ENCODE measurements at regions of chr1 and their contacts with region 1.

Region 1: DNA sequence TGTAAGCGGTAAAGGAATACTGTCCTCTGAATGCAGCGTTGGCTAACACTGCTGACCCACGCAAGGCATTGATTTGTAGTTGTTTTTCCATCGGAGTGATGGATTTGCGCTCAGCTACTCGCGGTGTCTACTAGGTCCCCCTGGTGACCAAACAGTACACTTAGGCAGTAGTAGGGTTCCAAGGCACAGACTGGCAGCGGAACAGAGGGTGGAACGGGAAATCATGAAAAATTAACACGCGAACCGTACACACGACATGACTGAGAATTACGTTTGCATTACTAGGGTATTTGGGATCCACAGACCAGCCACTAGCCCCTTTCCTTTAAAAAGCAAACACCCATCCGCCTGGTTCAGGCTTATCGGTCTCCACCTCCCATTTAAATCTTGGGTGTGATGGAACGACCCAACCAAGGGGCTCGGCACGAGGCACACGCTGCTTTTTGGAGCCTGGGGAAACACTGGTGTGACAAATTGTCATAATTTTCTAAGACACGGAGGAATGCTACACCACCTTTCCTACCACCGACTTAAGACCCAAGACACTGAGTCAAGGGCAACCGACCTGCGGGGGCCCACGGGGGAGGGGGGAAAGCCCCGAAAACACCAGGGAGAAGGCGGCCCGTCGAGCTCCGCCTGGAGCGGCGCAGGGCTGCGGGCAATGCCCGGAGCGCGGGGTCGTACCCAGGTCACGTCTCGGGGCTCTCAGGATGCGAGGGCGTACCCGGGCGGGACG is 699 bp downstream of the DIPK1A start:
- DNase-seq: peak; percentile 40 to 90 (median 62)
- ATAC-seq: peak; percentile 41
- H3K4me3 ChIP-seq: peak overlapping the region; percentile 81 to 82
- H3K4me3 Mint-ChIP-seq: peak overlapping the region; percentile 92
- H3K27ac ChIP-seq: peak overlapping the region; percentile 85 to 87
- H3K27ac Mint-ChIP-seq: peak overlapping the region; percentile 96
- H3K4me1 ChIP-seq: peaks cover 57% of the 10 kb centered on the region
- H3K4me1 Mint-ChIP-seq: peaks cover 40% of the 10 kb centered on the region
- H3K27me3 ChIP-seq: no peaks in the 10 kb centered on the region
- H3K27me3 Mint-ChIP-seq: no peaks in the 10 kb centered on the region
- CTCF ChIP-seq: peak; percentile 58

Region 2: GRCh38 chr1:92877792-92878191 is 82.8 kb before region 1 on chr1:
- CTCF ChIA-PET with region 1: interaction called, 10 read pairs
- POLR2A ChIA-PET with region 1: interaction called, 8 read pairs
- intact Hi-C with region 1: loop called in 1 of 2 experiments (anchors 5 kb)
- DNase-seq: peak in 2 of 9 experiments; percentile 40 to 59
- ATAC-seq: peak; percentile 29
- H3K4me3 ChIP-seq: peak overlapping the region in 1 of 2 experiments; percentile 13
- H3K4me3 Mint-ChIP-seq: peak overlapping the region; percentile 33
- H3K27ac ChIP-seq: peak overlapping the region in 1 of 2 experiments; percentile 67
- H3K27ac Mint-ChIP-seq: peak overlapping the region; percentile 88
- H3K4me1 ChIP-seq: peaks cover 20% of the 10 kb centered on the region
- H3K4me1 Mint-ChIP-seq: peaks cover 39% of the 10 kb centered on the region
- H3K27me3 ChIP-seq: no peaks in the 10 kb centered on the region
- H3K27me3 Mint-ChIP-seq: no peaks in the 10 kb centered on the region
- CTCF ChIP-seq: no peak

Region 3: DNA sequence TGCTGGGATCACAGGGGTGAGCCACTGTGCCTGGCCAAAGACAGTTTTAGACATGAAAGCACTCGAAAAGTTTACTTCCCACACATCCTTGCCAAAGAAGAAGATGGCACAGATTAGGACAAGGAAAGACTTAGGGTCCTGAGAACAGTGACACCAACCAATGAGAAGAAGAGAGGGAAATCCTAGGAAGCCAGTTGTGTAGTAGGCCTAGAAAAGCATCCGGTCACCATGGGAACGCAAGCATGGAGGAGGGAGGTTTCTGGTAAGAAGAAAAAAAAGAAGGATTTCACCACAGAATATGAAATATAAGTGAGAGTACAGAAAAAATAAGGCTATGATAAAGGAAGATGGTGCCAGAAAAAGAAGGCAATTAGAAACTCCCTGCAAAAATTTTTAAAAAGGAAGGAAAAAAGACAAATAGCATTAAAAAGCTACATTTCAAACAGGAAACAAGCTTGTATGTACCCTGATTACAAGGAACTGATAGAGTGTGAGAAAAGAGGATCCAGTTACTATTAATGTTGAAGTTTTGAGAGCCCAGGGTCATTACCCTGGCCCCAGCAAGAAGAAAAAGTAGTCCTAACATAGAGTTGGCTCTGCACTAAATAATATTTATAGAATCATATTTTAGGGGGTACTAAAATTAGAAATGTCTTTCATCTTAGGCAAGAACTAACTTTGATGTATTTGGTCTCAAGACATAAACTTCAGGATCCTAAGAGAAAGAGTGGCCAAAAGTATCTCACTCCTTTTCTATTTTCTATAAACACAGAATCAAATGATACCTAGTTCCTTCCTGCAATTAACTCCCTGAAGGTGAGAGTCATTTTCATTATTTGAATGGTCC is 15.4 kb before region 1 on chr1:
- CTCF ChIA-PET with region 1: interaction called, 11 read pairs
- POLR2A ChIA-PET with region 1: interaction called, 30 read pairs
- intact Hi-C with region 1: no loop called
- DNase-seq: no peak
- ATAC-seq: no peak
- H3K4me3 ChIP-seq: no peak overlapping the region
- H3K4me3 Mint-ChIP-seq: no peak overlapping the region
- H3K27ac ChIP-seq: no peak overlapping the region
- H3K27ac Mint-ChIP-seq: no peak overlapping the region
- H3K4me1 ChIP-seq: peaks cover 29% of the 10 kb centered on the region
- H3K4me1 Mint-ChIP-seq: peaks cover 58% of the 10 kb centered on the region
- H3K27me3 ChIP-seq: no peaks in the 10 kb centered on the region
- H3K27me3 Mint-ChIP-seq: no peaks in the 10 kb centered on the region
- CTCF ChIP-seq: no peak

Region 4: GRCh38 chr1:93000751-93001175 is 40.2 kb after region 1 on chr1:
- CTCF ChIA-PET with region 1: interaction called, 15 read pairs
- POLR2A ChIA-PET with region 1: interaction called, 7 read pairs
- intact Hi-C with region 1: loop called in 1 of 2 experiments (anchors 2 kb)
- DNase-seq: no peak
- ATAC-seq: no peak
- H3K4me3 ChIP-seq: no peak overlapping the region
- H3K4me3 Mint-ChIP-seq: no peak overlapping the region
- H3K27ac ChIP-seq: no peak overlapping the region
- H3K27ac Mint-ChIP-seq: no peak overlapping the region
- H3K4me1 ChIP-seq: no peaks in the 10 kb centered on the region
- H3K4me1 Mint-ChIP-seq: peaks cover 4% of the 10 kb centered on the region
- H3K27me3 ChIP-seq: no peaks in the 10 kb centered on the region
- H3K27me3 Mint-ChIP-seq: peaks cover 4% of the 10 kb centered on the region
- CTCF ChIP-seq: no peak

Region 5: GRCh38 chr1:93051961-93052360 is 91.4 kb after region 1 on chr1:
- CTCF ChIA-PET with region 1: no interaction called
- POLR2A ChIA-PET with region 1: no interaction called
- intact Hi-C with region 1: no loop called
- DNase-seq: no peak
- ATAC-seq: no peak
- H3K4me3 ChIP-seq: no peak overlapping the region
- H3K4me3 Mint-ChIP-seq: no peak overlapping the region
- H3K27ac ChIP-seq: no peak overlapping the region
- H3K27ac Mint-ChIP-seq: no peak overlapping the region
- H3K4me1 ChIP-seq: no peaks in the 10 kb centered on the region
- H3K4me1 Mint-ChIP-seq: no peaks in the 10 kb centered on the region
- H3K27me3 ChIP-seq: no peaks in the 10 kb centered on the region
- H3K27me3 Mint-ChIP-seq: peaks cover 2% of the 10 kb centered on the region
- CTCF ChIP-seq: no peak

Region 6: DNA sequence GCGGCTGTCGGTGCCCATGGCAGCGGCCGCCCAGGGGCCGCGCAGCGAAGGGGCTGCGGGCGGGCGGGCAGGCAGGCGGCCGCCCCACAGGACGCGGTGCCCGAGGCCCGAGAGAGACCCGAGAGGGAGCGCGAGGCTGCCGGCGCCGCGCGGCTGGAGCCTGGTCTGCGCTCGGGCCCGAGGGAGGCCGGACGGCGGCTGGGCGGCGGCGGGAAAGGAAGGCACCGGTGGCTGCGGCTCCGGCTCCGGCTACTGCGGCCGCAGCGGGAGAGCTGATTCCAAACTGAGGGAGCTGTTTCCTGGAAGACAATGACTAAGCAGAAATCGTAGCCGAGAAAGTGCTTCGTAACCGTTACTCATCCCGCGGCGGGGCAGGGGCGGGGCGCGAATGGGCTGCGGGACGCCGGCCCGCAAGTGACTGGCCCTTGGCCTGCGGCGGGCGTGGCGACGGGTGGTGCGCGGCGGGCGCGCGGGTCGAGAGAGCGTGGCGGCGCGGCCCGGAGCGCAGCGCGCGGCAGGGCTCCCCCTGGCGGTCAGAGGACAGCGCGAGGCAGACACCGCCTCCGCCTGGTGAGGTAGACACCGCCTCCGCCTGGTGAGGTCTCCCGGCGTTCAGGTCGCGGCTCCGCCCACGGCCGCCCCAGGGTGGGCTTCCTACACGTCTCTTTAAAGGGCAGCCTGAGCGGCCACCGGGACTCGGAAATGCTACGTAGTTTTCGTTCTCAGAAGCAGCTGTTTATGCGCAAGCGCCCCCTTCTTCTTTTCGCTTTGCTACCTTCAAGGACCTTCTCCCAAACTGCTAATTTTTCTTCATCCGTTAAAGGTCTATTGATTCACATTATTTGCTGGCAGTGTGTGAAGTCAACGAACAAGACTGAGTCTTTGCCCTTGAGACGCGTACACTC is 948.8 kb after region 1 on chr1 and contains the start of gene GCLM:
- CTCF ChIA-PET with region 1: no interaction called
- POLR2A ChIA-PET with region 1: no interaction called
- intact Hi-C with region 1: loop called in 1 of 2 experiments (anchors 2 kb)
- DNase-seq: peak; percentile 76 to 95 (median 91)
- ATAC-seq: peak; percentile 89
- H3K4me3 ChIP-seq: peak within 1 kb of the TSS; percentile 62 to 67
- H3K4me3 Mint-ChIP-seq: peak within 1 kb of the TSS; percentile 88
- H3K27ac ChIP-seq: peak within 1 kb of the TSS; percentile 72 to 76
- H3K27ac Mint-ChIP-seq: peak within 1 kb of the TSS; percentile 92
- H3K4me1 ChIP-seq: peaks cover 12% of the 10 kb centered on the region
- H3K4me1 Mint-ChIP-seq: peaks cover 37% of the 10 kb centered on the region
- H3K27me3 ChIP-seq: no peaks in the 10 kb centered on the region
- H3K27me3 Mint-ChIP-seq: no peaks in the 10 kb centered on the region
- CTCF ChIP-seq: peak; percentile 86
- total RNA-seq, gene GCLM: 6.4 to 6.8 TPM